Activated B cell treated with CpG ODN at 0.5 μM for 24 hours (primary cell): ENCODE measurements at regions of chr10 and their contacts with region 1.

Region 1: GRCh38 chr10:68043030-68043429 is 32.1 kb downstream of the HERC4 start:
- DNase-seq: no peak
- ATAC-seq: no peak
- H3K4me3 Mint-ChIP-seq: no peak overlapping the region
- H3K27ac Mint-ChIP-seq: no peak overlapping the region
- H3K4me1 Mint-ChIP-seq: peaks cover 35% of the 10 kb centered on the region
- H3K27me3 Mint-ChIP-seq: no peaks in the 10 kb centered on the region
- CTCF ChIP-seq: no peak

Region 2: DNA sequence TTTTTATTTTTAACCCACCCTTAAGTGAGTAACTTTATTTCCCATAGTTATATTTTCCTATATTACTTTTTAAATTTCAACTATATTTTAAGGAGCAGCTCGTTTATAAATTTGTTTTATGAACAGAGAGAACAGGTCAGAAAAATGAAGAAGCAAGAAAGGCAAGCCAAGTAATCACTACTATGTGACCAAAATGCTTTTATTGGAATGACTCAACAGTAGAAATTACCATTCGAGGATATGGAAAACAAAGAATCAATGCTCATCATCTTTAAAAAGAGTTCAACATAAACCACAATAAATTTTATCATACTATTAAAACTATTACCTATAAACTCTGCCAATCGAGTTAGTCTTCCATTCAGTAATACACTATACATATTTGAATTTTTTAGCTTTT is 24.5 kb after region 1 on chr10:
- CTCF ChIA-PET with region 1: no interaction called
- POLR2A ChIA-PET with region 1: interaction called, 11 read pairs
- intact Hi-C with region 1: loop called (anchors 5 kb)
- DNase-seq: no peak
- ATAC-seq: no peak
- H3K4me3 Mint-ChIP-seq: no peak overlapping the region
- H3K27ac Mint-ChIP-seq: no peak overlapping the region
- H3K4me1 Mint-ChIP-seq: peaks cover 34% of the 10 kb centered on the region
- H3K27me3 Mint-ChIP-seq: no peaks in the 10 kb centered on the region
- CTCF ChIP-seq: no peak